ENCODE measurements at regions of chr16 and their contacts with region 1.

Region 1: DNA sequence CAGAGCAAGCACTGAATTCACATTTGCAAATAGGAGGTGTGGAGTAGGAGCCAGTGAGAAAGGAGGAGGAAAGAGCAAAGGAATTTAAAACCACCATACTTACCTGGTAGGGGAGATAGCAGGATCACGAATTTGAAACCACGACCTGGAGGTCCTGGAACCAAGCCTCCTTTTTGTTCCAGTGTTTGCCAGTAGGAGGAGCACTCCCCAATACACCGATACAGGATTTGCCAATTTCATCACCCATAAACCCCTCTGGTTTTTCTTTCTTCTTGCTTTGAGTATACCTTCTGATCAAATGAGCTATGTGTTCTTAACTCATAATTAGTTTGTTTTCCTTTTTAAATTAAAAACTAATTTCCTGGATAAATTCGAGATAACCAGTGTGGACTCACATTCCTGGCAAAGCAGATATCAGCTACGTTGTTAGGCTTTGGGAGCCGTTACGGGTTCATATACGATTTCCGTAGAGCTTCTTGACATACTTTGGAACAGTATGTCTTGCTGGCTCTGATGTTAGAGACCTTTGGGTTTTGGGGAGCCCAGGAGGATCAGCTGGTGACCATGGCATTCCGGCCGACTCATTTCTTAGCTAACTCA is 22.7 kb downstream of the BCO1 start:
- DNase-seq: peak; percentile 55
- ATAC-seq: peak; percentile 65
- H3K4me3 Mint-ChIP-seq: no peak overlapping the region
- H3K27ac Mint-ChIP-seq: no peak overlapping the region
- H3K4me1 Mint-ChIP-seq: no peaks in the 10 kb centered on the region
- H3K27me3 Mint-ChIP-seq: peaks cover 5% of the 10 kb centered on the region

Region 2: GRCh38 chr16:81335669-81336068 is 74.5 kb after region 1 on chr16:
- CTCF ChIA-PET with region 1: no interaction called
- POLR2A ChIA-PET with region 1: interaction called, 11 read pairs
- intact Hi-C with region 1: no loop called
- DNase-seq: peak; percentile 79
- ATAC-seq: peak; percentile 98
- H3K4me3 Mint-ChIP-seq: no peak overlapping the region
- H3K27ac Mint-ChIP-seq: peak overlapping the region; percentile 57
- H3K4me1 Mint-ChIP-seq: peaks cover 27% of the 10 kb centered on the region
- H3K27me3 Mint-ChIP-seq: no peaks in the 10 kb centered on the region

Region 3: GRCh38 chr16:81349996-81350618 is 89.0 kb after region 1 on chr16:
- CTCF ChIA-PET with region 1: interaction called, 4 read pairs
- POLR2A ChIA-PET with region 1: no interaction called
- intact Hi-C with region 1: loop called in 1 of 2 experiments (anchors 2 kb)
- DNase-seq: no peak
- ATAC-seq: peak; percentile 25
- H3K4me3 Mint-ChIP-seq: no peak overlapping the region
- H3K27ac Mint-ChIP-seq: no peak overlapping the region
- H3K4me1 Mint-ChIP-seq: peaks cover 15% of the 10 kb centered on the region
- H3K27me3 Mint-ChIP-seq: no peaks in the 10 kb centered on the region

Region 4: GRCh38 chr16:81723098-81723723 is 462.1 kb after region 1 on chr16:
- CTCF ChIA-PET with region 1: no interaction called
- POLR2A ChIA-PET with region 1: no interaction called
- intact Hi-C with region 1: loop called in 1 of 2 experiments (anchors 2 kb)
- DNase-seq: peak; percentile 47
- ATAC-seq: peak; percentile 79
- H3K4me3 Mint-ChIP-seq: no peak overlapping the region
- H3K27ac Mint-ChIP-seq: no peak overlapping the region
- H3K4me1 Mint-ChIP-seq: peaks cover 13% of the 10 kb centered on the region
- H3K27me3 Mint-ChIP-seq: no peaks in the 10 kb centered on the region

Region 5: DNA sequence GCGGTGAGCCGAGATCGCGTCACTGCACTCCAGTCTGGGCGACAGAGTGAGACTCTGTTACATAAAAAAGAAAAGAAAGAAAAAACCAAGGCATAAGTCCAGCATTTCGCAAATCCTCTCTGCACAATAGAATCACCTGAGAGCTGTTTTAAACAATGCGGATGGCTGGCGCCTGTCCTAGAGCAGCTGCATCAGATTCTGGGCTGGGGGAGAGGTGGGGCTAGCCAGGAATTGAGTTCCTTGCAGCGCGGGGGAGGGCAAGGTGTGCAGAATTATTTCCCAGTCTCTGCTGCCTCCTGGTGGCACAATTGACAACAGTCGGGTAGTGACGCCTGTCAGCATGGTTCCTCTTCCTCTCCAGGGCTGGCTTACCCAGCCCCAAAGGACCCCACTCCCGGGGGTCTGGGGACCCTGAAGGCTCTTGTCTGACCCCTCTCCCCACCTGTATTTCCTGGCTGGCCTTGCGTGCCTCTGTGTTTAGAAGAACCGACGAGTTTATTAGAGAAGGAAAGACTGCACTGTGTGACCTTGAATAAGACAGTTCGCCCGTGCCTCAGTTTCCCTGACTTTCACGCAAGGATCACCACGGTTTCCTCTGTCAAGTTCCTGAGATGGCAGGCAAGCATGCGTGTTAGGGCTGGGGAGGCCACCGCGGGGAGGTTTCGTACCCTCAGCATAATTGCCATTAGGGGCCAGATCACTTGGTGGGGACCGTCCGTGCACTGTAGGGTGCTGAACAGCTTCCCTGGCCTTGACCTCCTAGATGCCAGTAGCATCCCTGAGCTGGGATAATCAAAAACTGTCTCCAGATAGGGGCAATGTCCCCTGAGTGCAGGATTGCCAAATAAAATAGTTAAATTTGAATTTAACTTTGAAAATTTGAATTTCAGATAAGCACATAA is 477.0 kb after region 1 on chr16:
- CTCF ChIA-PET with region 1: interaction called, 3 read pairs
- POLR2A ChIA-PET with region 1: no interaction called
- intact Hi-C with region 1: loop called in 1 of 2 experiments (anchors 5 kb)
- DNase-seq: peak; percentile 93
- ATAC-seq: peak; percentile 98
- H3K4me3 Mint-ChIP-seq: peak overlapping the region; percentile 55
- H3K27ac Mint-ChIP-seq: peak overlapping the region; percentile 51
- H3K4me1 Mint-ChIP-seq: no peaks in the 10 kb centered on the region
- H3K27me3 Mint-ChIP-seq: no peaks in the 10 kb centered on the region

Region 6: DNA sequence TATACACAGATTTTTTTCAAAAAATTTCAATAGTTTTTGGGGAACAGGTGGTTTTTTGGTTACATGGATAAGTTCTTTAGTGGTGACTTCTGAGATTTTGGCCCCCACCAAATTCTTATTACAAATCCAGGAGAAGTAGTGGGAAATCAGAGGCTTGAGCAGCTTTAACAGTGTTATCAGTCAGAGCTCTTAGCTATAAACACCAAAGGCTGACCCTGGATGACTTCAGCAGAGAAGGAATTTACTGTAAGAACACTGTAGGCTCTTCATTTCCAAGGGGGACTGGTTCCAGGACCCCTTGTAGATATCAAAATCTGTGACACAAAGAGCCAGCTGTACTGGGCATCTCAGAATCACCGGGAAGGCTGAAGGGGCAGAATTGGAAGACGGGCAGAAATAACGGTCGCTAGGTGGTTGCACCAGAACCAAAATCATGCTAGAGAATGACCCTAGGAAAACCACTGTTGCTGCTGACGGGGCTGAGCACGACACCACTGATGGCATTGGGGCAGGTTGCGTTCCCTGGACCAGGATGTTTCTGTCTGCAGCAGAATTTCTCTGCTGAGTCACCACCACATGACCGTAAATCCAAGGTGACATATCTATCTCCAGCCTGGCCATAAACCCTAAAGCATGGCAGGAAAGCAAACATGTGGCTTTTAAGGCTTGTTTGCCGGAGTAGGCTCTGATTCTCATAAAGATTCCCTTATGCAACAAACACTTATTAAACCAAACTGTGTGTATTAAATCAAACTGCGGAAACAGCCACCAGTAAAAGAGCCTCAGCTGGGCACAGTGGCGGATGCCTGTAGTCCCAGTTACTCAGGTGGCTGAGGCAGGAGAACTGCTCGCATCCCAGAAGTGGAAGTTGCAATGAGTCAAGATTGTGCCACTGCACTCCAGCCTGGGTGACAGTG is 891.3 kb after region 1 on chr16:
- CTCF ChIA-PET with region 1: no interaction called
- POLR2A ChIA-PET with region 1: no interaction called
- intact Hi-C with region 1: no loop called
- DNase-seq: no peak
- ATAC-seq: no peak
- H3K4me3 Mint-ChIP-seq: no peak overlapping the region
- H3K27ac Mint-ChIP-seq: no peak overlapping the region
- H3K4me1 Mint-ChIP-seq: peaks cover 12% of the 10 kb centered on the region
- H3K27me3 Mint-ChIP-seq: no peaks in the 10 kb centered on the region